Kidney (tissue), 22 donors: ENCODE measurements at regions of chr17 and their contacts with region 1.

Region 1: GRCh38 chr17:39077866-39078265 is 73.6 kb downstream of the PLXDC1 start:
- DNase-seq: no peak
- H3K4me3 ChIP-seq: no peak overlapping the region
- H3K27ac ChIP-seq: no peak overlapping the region
- H3K4me1 ChIP-seq: peaks cover 0 to 2% (median 0%) of the 10 kb centered on the region in 3 donors
- H3K27me3 ChIP-seq: no peaks in the 10 kb centered on the region
- CTCF ChIP-seq: no peak

Region 2: GRCh38 chr17:39144416-39144840 is 66.6 kb after region 1 on chr17:
- intact Hi-C with region 1: loop called (anchors 10 kb)
- DNase-seq: peak in 1 of 5 donors; percentile 95
- H3K4me3 ChIP-seq: no peak overlapping the region
- H3K27ac ChIP-seq: peak overlapping the region in 1 of 2 donors; percentile 1
- H3K4me1 ChIP-seq: no peaks in the 10 kb centered on the region
- H3K27me3 ChIP-seq: no peaks in the 10 kb centered on the region
- CTCF ChIP-seq: no peak